ENCODE measurements at regions of chr7 and their contacts with region 1.

Region 1: GRCh38 chr7:148884299-148885022 is 370 bp upstream of the EZH2 start:
- DNase-seq: peak; percentile 96
- H3K4me3 Mint-ChIP-seq: peak overlapping the region; percentile 92
- H3K27ac Mint-ChIP-seq: peak overlapping the region; percentile 98
- H3K4me1 Mint-ChIP-seq: peaks cover 31% of the 10 kb centered on the region
- H3K27me3 Mint-ChIP-seq: no peaks in the 10 kb centered on the region

Region 2: DNA sequence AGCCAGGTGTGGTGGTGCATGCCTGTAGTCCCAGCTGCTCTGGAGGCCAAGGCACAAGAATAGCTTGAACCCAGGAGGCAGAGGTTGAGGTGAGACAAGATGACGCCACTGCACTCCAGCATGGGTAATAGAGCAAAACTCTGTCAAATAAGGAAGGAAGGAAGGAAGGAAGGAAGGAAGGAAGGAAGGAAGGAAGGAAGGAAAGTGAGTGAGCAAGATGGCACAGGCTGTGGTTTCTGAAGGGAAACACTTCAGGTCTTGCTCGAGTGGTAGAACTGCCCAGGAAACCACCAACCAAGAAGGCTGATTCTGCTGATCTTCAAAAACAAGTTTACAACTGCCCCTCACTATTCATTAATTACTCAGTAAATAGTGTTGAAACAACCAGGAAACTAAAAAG is 45.6 kb before region 1 on chr7:
- CTCF ChIA-PET with region 1: no interaction called
- POLR2A ChIA-PET with region 1: no interaction called
- intact Hi-C with region 1: loop called (anchors 5 kb)
- DNase-seq: no peak
- H3K4me3 Mint-ChIP-seq: no peak overlapping the region
- H3K27ac Mint-ChIP-seq: no peak overlapping the region
- H3K4me1 Mint-ChIP-seq: peaks cover 26% of the 10 kb centered on the region
- H3K27me3 Mint-ChIP-seq: no peaks in the 10 kb centered on the region

Region 3: DNA sequence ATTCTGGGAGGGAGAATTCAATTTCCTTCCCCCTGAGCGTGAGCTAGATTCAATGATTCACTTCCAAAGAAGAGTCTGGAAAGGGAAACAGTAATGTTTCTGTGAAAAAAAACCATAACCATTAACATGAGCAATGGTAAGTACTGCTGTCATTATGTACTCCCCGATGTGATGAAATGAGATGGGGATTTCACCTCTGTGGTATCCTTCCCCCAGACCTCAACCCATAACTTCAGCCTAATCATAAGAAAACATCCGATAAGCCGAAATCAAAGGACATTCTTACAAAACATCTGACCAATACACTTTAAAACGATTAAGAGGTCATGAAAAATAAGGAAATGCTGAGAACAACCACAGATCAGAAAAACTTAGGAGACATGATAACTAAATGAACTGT is 27.6 kb before region 1 on chr7:
- CTCF ChIA-PET with region 1: interaction called, 18 read pairs
- POLR2A ChIA-PET with region 1: interaction called, 6 read pairs
- intact Hi-C with region 1: loop called (anchors 1 kb)
- DNase-seq: peak; percentile 50
- H3K4me3 Mint-ChIP-seq: peak overlapping the region; percentile 40
- H3K27ac Mint-ChIP-seq: peak overlapping the region; percentile 82
- H3K4me1 Mint-ChIP-seq: peaks cover 39% of the 10 kb centered on the region
- H3K27me3 Mint-ChIP-seq: no peaks in the 10 kb centered on the region

Region 4: DNA sequence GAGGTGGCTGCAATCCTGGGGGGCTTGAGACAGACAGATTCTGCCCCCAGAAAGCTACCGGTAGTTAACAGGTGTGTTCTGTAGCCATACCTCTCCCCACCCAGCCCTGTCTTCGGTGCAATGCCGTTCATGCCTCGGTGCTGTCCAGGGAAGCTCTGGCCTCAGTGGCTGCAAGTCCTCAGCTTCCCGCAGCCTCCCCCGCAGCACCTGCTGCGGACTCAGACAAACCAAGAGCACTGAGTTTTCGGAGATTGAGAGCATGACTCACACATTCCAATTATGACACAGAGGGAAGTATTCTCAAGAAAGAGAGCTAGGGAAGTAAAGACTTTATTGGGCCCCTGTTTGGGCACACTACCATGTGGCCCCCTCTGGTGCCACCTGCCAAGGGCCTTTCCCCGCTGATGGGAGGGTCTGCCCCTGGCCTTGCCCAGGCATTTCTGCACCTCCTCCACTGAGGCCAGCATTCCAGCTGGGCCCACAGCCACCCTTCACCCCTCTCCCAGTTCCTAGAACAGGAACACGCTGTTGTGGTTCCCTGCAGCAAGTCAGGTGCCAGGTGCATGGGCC is 29.8 kb after region 1 on chr7:
- CTCF ChIA-PET with region 1: interaction called, 5 read pairs
- POLR2A ChIA-PET with region 1: interaction called, 52 read pairs
- intact Hi-C with region 1: loop called (anchors 1 kb)
- DNase-seq: peak; percentile 87
- H3K4me3 Mint-ChIP-seq: peak overlapping the region; percentile 62
- H3K27ac Mint-ChIP-seq: peak overlapping the region; percentile 93
- H3K4me1 Mint-ChIP-seq: peaks cover 66% of the 10 kb centered on the region
- H3K27me3 Mint-ChIP-seq: no peaks in the 10 kb centered on the region

Region 5: GRCh38 chr7:148940702-148941597 is 56.5 kb after region 1 on chr7:
- CTCF ChIA-PET with region 1: interaction called, 21 read pairs
- POLR2A ChIA-PET with region 1: interaction called, 25 read pairs
- intact Hi-C with region 1: loop called (anchors 1 kb)
- DNase-seq: peak; percentile 70
- H3K4me3 Mint-ChIP-seq: peak overlapping the region; percentile 94
- H3K27ac Mint-ChIP-seq: peak overlapping the region; percentile 94
- H3K4me1 Mint-ChIP-seq: peaks cover 14% of the 10 kb centered on the region
- H3K27me3 Mint-ChIP-seq: no peaks in the 10 kb centered on the region

Region 6: GRCh38 chr7:148954766-148955165 is 70.3 kb after region 1 on chr7:
- CTCF ChIA-PET with region 1: no interaction called
- POLR2A ChIA-PET with region 1: no interaction called
- intact Hi-C with region 1: no loop called
- DNase-seq: no peak
- H3K4me3 Mint-ChIP-seq: no peak overlapping the region
- H3K27ac Mint-ChIP-seq: no peak overlapping the region
- H3K4me1 Mint-ChIP-seq: no peaks in the 10 kb centered on the region
- H3K27me3 Mint-ChIP-seq: no peaks in the 10 kb centered on the region

Region 7: DNA sequence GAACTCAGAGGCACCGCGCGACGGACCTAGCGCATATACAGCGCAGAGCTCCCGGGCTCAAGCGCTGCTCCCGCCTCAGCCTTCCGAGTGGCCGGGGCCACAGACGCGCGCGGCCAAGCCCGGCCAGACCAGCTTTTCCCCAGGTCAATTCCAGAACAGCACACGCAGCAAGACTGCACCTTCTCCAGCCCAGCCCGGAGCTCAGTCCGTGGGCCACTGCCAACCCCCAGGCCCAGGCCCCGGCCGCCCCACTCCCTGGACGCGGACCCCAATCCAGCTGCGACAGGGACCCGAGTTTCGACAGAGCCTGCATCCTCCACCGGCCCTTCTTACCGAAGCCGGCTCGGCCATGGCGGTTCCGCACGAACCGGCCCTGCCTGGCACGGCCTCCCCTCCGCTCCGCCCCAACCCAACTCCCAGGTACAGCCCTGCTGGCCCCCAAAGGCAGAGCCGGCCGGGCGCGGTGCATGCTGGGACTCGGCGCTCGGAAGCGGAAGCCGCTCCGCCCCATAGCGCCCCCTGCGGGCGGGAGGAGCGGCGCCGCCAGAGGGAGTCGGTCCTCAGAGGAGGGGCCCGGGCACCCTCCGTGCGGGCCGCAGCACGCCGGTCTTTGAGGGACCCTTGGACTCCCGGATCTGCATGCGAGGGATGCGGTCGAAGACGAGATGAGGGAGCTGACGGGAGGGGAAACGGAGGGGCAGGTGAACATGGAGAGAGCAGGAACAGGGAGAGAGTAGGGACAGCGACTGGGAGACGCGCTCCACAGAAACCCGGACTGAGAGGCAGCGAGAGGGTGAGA is 241.6 kb after region 1 on chr7 and contains the start of gene ZNF425:
- CTCF ChIA-PET with region 1: interaction called, 3 read pairs
- POLR2A ChIA-PET with region 1: interaction called, 3 read pairs
- intact Hi-C with region 1: loop called (anchors 2 kb)
- DNase-seq: peak; percentile 95
- H3K4me3 Mint-ChIP-seq: peak within 1 kb of the TSS; percentile 98
- H3K27ac Mint-ChIP-seq: peak within 1 kb of the TSS; percentile 98
- H3K4me1 Mint-ChIP-seq: peaks cover 18% of the 10 kb centered on the region
- H3K27me3 Mint-ChIP-seq: no peaks in the 10 kb centered on the region
- total RNA-seq, gene ZNF425: 0.74 to 0.75 TPM